Activated naive CD8-positive, alpha-beta T cell treated with anti-CD3 and anti-CD28 coated beads, Interleukin-2, amount 10 ng/mL, durations not matched to agents 7 days and 5 days (primary cell): ENCODE measurements at regions of chr10 and their contacts with region 1.

Region 1: GRCh38 chr10:72248468-72249151 is 25.1 kb upstream of the DDIT4 start:
- DNase-seq: peak; percentile 77
- ATAC-seq: peak; percentile 87
- H3K4me3 Mint-ChIP-seq: peak overlapping the region; percentile 86
- H3K27ac Mint-ChIP-seq: peak overlapping the region; percentile 93
- H3K4me1 Mint-ChIP-seq: peaks cover 71% of the 10 kb centered on the region
- H3K27me3 Mint-ChIP-seq: no peaks in the 10 kb centered on the region

Region 2: GRCh38 chr10:72215652-72216549 is 32.7 kb before region 1 on chr10 and contains the starts of genes ANAPC16 and ASCC1:
- POLR2A ChIA-PET with region 1: interaction called, 12 read pairs
- DNase-seq: peak; percentile 99
- ATAC-seq: peak; percentile 87
- H3K4me3 Mint-ChIP-seq: peak within 1 kb of the TSS; percentile 93
- H3K27ac Mint-ChIP-seq: peak within 1 kb of the TSS; percentile 93
- H3K4me1 Mint-ChIP-seq: peaks cover 40% of the 10 kb centered on the region
- H3K27me3 Mint-ChIP-seq: no peaks in the 10 kb centered on the region
- total RNA-seq, gene ANAPC16: 89.2 to 89.8 TPM
- total RNA-seq, gene ASCC1: 28.5 to 34.4 TPM

Region 3: GRCh38 chr10:72260588-72261322 is 12.1 kb after region 1 on chr10:
- POLR2A ChIA-PET with region 1: interaction called, 102 read pairs
- DNase-seq: peak; percentile 95
- ATAC-seq: peak; percentile 80
- H3K4me3 Mint-ChIP-seq: peak overlapping the region; percentile 80
- H3K27ac Mint-ChIP-seq: peak overlapping the region; percentile 91
- H3K4me1 Mint-ChIP-seq: peaks cover 55% of the 10 kb centered on the region
- H3K27me3 Mint-ChIP-seq: no peaks in the 10 kb centered on the region

Region 4: DNA sequence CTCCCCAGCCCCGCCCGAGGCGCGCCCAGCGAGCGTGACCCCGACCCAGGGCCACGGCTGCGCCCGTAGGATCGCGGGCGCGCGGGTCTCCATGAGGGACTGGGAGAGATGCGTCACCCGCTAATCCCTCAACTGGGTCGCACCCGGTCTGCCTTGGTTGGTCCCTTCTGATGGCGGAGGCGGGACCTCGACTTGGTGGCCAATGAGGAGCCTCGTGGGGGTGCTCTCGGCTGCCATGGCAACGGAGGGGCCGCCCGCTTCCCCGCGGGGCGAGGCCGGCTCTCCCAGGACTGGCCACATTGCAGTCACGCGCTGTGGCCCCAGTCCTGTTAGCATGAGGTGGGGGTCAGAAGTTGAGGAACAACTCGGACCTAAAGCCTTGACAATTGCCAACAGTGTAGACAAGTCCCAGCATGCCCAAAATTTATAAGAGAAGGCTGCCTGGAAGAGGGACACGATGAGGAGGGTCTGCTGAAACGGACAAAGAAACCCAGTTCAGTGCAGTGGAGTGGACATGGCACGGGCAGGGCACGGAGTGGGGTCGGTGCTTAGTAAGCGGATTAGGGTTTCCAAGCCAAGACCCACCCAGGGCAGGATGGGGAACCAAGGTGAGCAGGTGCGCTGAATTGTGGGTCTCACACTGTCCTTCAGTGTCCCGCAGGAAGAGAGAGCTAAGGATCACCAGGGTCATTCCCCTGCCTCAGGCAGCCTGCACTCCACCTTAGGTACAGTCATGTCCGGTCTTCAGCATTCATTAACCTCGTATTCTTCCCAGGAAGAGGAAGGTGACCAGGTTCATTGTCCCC is 49.6 kb after region 1 on chr10:
- POLR2A ChIA-PET with region 1: interaction called, 17 read pairs
- DNase-seq: peak; percentile 89
- ATAC-seq: peak; percentile 76
- H3K4me3 Mint-ChIP-seq: peak overlapping the region; percentile 80
- H3K27ac Mint-ChIP-seq: peak overlapping the region; percentile 95
- H3K4me1 Mint-ChIP-seq: peaks cover 52% of the 10 kb centered on the region
- H3K27me3 Mint-ChIP-seq: no peaks in the 10 kb centered on the region

Region 5: GRCh38 chr10:72319416-72320254 is 71.0 kb after region 1 on chr10:
- POLR2A ChIA-PET with region 1: interaction called, 38 read pairs
- DNase-seq: peak; percentile 94
- ATAC-seq: peak; percentile 72
- H3K4me3 Mint-ChIP-seq: peak overlapping the region; percentile 84
- H3K27ac Mint-ChIP-seq: peak overlapping the region; percentile 99
- H3K4me1 Mint-ChIP-seq: peaks cover 69% of the 10 kb centered on the region
- H3K27me3 Mint-ChIP-seq: no peaks in the 10 kb centered on the region

Region 6: DNA sequence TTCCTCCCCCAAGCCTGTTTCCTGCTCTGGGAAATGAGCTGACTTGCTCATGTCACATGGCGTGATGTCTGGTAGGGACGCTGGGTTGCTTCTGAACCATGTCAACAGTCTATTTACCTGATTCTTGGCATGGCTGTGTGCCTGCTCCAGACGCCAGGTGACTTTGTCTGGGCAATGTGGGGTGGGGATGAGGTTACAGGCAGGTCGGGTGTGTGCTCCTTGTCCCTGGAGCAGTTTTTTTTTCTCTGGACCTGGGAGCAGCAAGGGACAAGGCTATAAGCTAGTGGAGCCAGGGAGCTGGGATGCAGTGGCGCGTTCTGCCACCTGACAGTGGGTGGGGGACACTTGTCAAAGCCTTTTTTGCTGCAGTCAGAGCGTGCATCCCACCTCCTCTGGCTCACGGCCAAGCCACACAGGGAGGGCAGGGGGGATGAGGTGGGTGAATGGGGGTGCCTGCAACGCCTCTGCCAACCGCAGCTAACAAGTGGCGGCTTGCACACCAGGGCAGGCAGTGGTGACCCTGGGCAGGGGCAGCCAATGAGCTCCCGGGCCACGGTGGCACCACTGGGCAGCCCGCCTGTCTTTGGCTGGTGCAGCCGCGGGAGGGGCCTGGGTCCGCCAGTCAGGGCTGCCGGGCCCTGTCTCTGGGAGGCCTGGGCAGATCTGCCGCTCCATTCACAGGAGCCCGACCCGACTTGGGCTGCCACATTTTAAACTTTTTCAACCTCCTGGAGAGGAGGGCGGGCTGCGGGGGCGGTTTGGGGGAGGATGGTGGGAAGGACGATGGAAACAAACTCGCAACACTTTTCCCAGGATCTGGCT is 83.2 kb after region 1 on chr10:
- POLR2A ChIA-PET with region 1: interaction called, 22 read pairs
- DNase-seq: peak; percentile 89
- ATAC-seq: peak; percentile 61
- H3K4me3 Mint-ChIP-seq: peak overlapping the region; percentile 91
- H3K27ac Mint-ChIP-seq: peak overlapping the region; percentile 100
- H3K4me1 Mint-ChIP-seq: peaks cover 73% of the 10 kb centered on the region
- H3K27me3 Mint-ChIP-seq: no peaks in the 10 kb centered on the region

Region 7: GRCh38 chr10:72455889-72456595 is 207.4 kb after region 1 on chr10:
- POLR2A ChIA-PET with region 1: no interaction called
- DNase-seq: no peak
- ATAC-seq: no peak
- H3K4me3 Mint-ChIP-seq: no peak overlapping the region
- H3K27ac Mint-ChIP-seq: no peak overlapping the region
- H3K4me1 Mint-ChIP-seq: no peaks in the 10 kb centered on the region
- H3K27me3 Mint-ChIP-seq: no peaks in the 10 kb centered on the region